Caco-2 (cell line): ENCODE measurements at regions of chr20 and their contacts with region 1.

Region 1: GRCh38 chr20:48828022-48828743 is 384 bp upstream of the PREX1 start:
- DNase-seq: peak; percentile 86 to 96
- H3K4me3 ChIP-seq: peak overlapping the region; percentile 64
- H3K4me3 Mint-ChIP-seq: peak overlapping the region; percentile 77
- H3K27ac Mint-ChIP-seq: peak overlapping the region; percentile 10
- H3K4me1 ChIP-seq: peaks cover 19% of the 10 kb centered on the region
- H3K4me1 Mint-ChIP-seq: peaks cover 9% of the 10 kb centered on the region
- H3K27me3 ChIP-seq: 0 out of 2 replicates have a peak, but pooled peaks cover 4% of the 10 kb centered on the region
- H3K27me3 Mint-ChIP-seq: peaks cover 3% of the 10 kb centered on the region
- CTCF ChIP-seq: peak in 1 of 2 experiments; percentile 7

Region 2: DNA sequence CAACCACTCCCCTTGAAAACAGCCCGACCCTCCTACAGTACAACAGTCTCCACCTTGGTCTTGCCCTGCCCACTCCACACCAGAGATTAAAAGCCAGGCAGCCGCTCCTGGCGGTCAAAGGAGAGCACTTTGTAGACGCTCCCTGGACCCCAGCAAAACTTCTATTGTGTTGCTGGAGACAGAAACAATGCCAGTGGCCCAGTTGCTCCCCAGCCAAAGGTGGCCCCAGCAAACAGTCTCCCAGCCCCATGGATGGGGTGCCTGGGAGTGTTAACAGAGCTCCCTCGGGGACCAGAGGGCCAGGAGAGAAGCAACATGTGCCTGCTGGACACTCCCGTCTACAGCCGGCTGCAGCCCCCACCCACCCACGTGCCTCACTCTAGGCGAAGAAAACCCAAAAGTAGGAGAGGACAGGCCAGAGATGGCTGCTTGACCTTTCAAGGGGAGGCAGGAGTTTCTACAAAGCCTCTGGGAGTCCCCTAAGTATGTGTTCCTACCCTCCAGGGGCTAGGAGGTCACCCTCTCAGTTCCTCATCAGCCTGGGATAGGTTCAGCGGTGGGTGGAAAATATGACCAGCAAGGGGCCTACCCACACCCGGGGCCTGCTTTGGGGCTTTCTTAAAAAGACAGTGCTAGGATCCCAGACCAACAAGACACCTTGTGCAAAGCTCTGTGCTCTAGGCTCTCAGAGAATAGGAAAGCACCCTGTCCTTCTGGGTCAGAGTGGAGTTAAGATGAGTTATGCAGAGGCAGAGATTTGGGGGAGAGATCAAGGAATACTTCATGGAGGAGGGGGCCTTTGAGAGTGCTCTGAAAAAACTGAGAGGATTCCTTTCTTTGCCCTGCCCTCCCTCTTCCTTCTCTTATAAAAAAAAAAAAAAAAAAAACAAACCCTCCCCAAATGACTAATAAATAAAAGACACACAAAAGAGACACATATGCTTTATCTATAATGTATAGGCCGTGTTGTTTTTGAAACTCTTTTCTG is 18.6 kb after region 1 on chr20:
- CTCF ChIA-PET with region 1: no interaction called
- POLR2A ChIA-PET with region 1: no interaction called
- intact Hi-C with region 1: loop called (anchors 1 kb)
- DNase-seq: peak in 1 of 2 experiments; percentile 53
- H3K4me3 ChIP-seq: no peak overlapping the region
- H3K4me3 Mint-ChIP-seq: no peak overlapping the region
- H3K27ac Mint-ChIP-seq: no peak overlapping the region
- H3K4me1 ChIP-seq: no peaks in the 10 kb centered on the region
- H3K4me1 Mint-ChIP-seq: no peaks in the 10 kb centered on the region
- H3K27me3 ChIP-seq: no peaks in the 10 kb centered on the region
- H3K27me3 Mint-ChIP-seq: peaks cover 5% of the 10 kb centered on the region
- CTCF ChIP-seq: no peak

Region 3: GRCh38 chr20:48904365-48905296 is 76.4 kb after region 1 on chr20:
- CTCF ChIA-PET with region 1: no interaction called
- POLR2A ChIA-PET with region 1: no interaction called
- intact Hi-C with region 1: loop called (anchors 2 kb)
- DNase-seq: peak; percentile 75 to 86
- H3K4me3 ChIP-seq: no peak overlapping the region
- H3K4me3 Mint-ChIP-seq: no peak overlapping the region
- H3K27ac Mint-ChIP-seq: no peak overlapping the region
- H3K4me1 ChIP-seq: 0 out of 2 replicates have a peak, but pooled peaks cover 8% of the 10 kb centered on the region
- H3K4me1 Mint-ChIP-seq: peaks cover 9% of the 10 kb centered on the region
- H3K27me3 ChIP-seq: no peaks in the 10 kb centered on the region; the same call in 1 of the 2 replicates
- H3K27me3 Mint-ChIP-seq: peaks cover 15% of the 10 kb centered on the region
- CTCF ChIP-seq: peak; percentile 95 to 97